HepG2 (cell line): ENCODE measurements at regions of chr13 and their contacts with region 1.

Region 1: GRCh38 chr13:23715762-23716235 is 145.6 kb downstream of the TNFRSF19 start:
- DNase-seq: peak; percentile 62
- ATAC-seq: peak; percentile 93
- H3K4me3 ChIP-seq: peak overlapping the region; percentile 38 to 64 (median 49); a peak in 5 of 6 replicates
- H3K27ac ChIP-seq: no peak overlapping the region
- H3K4me1 ChIP-seq: peaks cover 46% of the 10 kb centered on the region
- H3K27me3 ChIP-seq: no peaks in the 10 kb centered on the region
- CTCF ChIP-seq: peak; percentile 94
- EP300 ChIP-seq: no peak
- POLR2A ChIP-seq: no peak
- RAD21 ChIP-seq: peak; percentile 89

Region 2: GRCh38 chr13:23510979-23511735 is 204.6 kb before region 1 on chr13:
- CTCF ChIA-PET with region 1: interaction called, 3 read pairs
- POLR2A ChIA-PET with region 1: no interaction called
- in situ Hi-C with region 1: no loop called
- intact Hi-C with region 1: loop called (anchors 2 kb)
- DNase-seq: peak; percentile 62
- ATAC-seq: peak; percentile 80
- H3K4me3 ChIP-seq: no peak overlapping the region
- H3K27ac ChIP-seq: no peak overlapping the region
- H3K4me1 ChIP-seq: peaks cover 2% of the 10 kb centered on the region
- H3K27me3 ChIP-seq: no peaks in the 10 kb centered on the region
- CTCF ChIP-seq: peak; percentile 72
- EP300 ChIP-seq: no peak
- POLR2A ChIP-seq: no peak
- RAD21 ChIP-seq: peak; percentile 53

Region 3: DNA sequence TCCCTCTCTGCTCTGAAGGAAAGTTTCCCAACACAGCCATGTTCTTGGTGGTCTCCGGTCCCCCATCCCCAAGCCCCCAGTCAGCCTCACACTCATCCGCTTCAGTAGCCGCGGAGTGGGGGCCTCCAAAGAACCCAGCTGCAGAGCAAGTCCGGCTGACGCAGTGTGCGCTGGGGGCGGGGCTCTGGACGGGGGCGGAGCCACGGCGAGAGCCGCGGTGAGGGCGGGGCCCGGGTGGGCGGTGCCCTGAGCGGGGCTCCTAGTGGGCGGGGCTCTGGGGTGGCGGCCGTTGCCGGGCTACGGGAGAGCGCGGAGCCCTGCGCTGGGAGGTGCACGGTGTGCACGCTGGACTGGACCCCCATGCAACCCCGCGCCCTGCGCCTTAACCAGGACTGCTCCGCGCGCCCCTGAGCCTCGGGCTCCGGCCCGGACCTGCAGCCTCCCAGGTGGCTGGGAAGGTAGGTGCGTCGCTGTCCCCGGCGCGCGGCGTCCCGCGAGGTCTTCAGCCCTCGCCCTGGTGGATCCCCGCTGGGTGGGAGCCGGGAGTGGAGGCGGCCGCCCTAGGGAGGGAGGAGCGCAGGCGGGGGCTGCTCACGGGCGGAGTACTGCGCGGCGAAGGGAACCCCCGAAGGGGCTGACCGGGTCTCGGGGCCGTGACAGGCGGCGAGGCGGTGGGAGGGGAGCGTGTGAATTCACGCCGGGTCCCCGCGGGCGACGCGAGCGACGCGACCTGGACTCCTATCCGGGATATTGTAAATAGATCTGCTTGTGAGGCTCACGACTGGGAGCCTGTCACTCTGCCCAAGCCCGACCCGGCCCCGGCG is 136.5 kb before region 1 on chr13:
- CTCF ChIA-PET with region 1: no interaction called
- POLR2A ChIA-PET with region 1: no interaction called
- in situ Hi-C with region 1: no loop called
- intact Hi-C with region 1: loop called (anchors 2 kb)
- DNase-seq: peak; percentile 79
- ATAC-seq: peak; percentile 96
- H3K4me3 ChIP-seq: peak overlapping the region; percentile 65 to 93 (median 90)
- H3K27ac ChIP-seq: peak overlapping the region; percentile 77
- H3K4me1 ChIP-seq: peaks cover 75% of the 10 kb centered on the region
- H3K27me3 ChIP-seq: no peaks in the 10 kb centered on the region
- CTCF ChIP-seq: no peak
- EP300 ChIP-seq: no peak
- POLR2A ChIP-seq: peak in 1 of 2 experiments; percentile 77; a peak in 3 of 4 replicates
- RAD21 ChIP-seq: no peak; the same call in 1 of the 2 replicates

Region 4: GRCh38 chr13:23856008-23856750 is 140.4 kb after region 1 on chr13:
- CTCF ChIA-PET with region 1: no interaction called
- POLR2A ChIA-PET with region 1: no interaction called
- in situ Hi-C with region 1: no loop called
- intact Hi-C with region 1: no loop called
- DNase-seq: no peak
- ATAC-seq: no peak
- H3K4me3 ChIP-seq: no peak overlapping the region
- H3K27ac ChIP-seq: no peak overlapping the region
- H3K4me1 ChIP-seq: peaks cover 19% of the 10 kb centered on the region
- H3K27me3 ChIP-seq: no peaks in the 10 kb centered on the region
- CTCF ChIP-seq: no peak
- EP300 ChIP-seq: no peak
- POLR2A ChIP-seq: no peak
- RAD21 ChIP-seq: no peak

Region 5: DNA sequence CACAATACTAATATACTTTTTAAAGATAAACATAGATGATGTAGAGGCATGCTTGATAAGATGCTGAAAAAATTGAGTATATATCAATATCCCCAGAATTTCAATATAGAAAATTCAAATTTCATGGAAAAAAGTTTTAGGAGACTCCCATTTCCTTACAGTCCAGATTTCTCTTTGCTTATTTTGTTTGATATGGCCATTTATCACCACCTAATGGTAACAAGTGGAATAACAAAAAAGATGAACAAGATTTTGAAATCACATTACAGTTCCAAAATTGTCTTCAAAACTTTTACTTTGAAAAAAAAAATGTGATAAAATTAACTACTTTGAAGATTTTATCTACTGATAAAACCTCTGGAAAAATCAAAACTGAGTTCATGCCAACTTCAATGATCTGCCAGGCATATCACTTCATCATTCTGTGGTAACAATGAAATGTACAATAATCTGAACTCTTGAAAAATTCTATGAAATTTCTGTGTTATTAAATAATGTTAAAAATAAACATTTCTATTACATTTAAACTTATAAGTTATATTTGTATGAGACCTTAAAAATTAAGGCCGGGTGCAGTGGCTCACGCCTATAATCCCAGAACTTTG is 155.9 kb after region 1 on chr13:
- CTCF ChIA-PET with region 1: interaction called, 34 read pairs
- POLR2A ChIA-PET with region 1: no interaction called
- in situ Hi-C with region 1: loop called (anchors 5 kb)
- intact Hi-C with region 1: loop called (anchors 1 kb)
- DNase-seq: peak; percentile 39
- ATAC-seq: no peak
- H3K4me3 ChIP-seq: no peak overlapping the region
- H3K27ac ChIP-seq: no peak overlapping the region
- H3K4me1 ChIP-seq: peaks cover 17% of the 10 kb centered on the region
- H3K27me3 ChIP-seq: no peaks in the 10 kb centered on the region
- CTCF ChIP-seq: peak; percentile 53
- EP300 ChIP-seq: no peak
- POLR2A ChIP-seq: no peak
- RAD21 ChIP-seq: no peak

Region 6: DNA sequence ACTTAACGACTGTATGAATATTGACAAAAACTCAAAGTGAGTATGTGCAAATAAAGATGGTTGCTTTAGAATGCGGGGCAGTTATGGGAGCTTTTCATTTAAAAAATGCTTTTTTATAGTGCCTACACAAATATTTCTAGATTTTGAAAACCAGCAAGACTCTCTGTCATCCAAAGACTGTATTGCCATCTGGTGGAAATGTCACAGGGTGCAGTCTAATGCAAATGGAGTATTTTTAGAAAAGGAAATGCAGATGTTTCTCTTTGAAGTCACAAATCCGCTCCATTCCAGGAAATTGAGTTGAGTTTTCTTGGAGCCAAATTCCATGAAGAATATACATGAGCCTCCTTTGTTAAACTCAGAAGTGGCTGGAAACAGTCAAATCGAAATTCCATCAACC is 183.8 kb after region 1 on chr13:
- CTCF ChIA-PET with region 1: interaction called, 8 read pairs
- POLR2A ChIA-PET with region 1: no interaction called
- in situ Hi-C with region 1: no loop called
- intact Hi-C with region 1: loop called (anchors 1 kb)
- DNase-seq: peak; percentile 36
- ATAC-seq: peak; percentile 61
- H3K4me3 ChIP-seq: no peak overlapping the region
- H3K27ac ChIP-seq: no peak overlapping the region
- H3K4me1 ChIP-seq: no peaks in the 10 kb centered on the region
- H3K27me3 ChIP-seq: peaks cover 3 to 14% of the 10 kb centered on the region in 2 experiments; a peak in 2 of 5 replicates
- CTCF ChIP-seq: peak; percentile 43; the same call in 1 of the 2 replicates
- EP300 ChIP-seq: no peak
- POLR2A ChIP-seq: no peak
- RAD21 ChIP-seq: no peak

Region 7: GRCh38 chr13:24618014-24618955 is 902.5 kb after region 1 on chr13:
- CTCF ChIA-PET with region 1: no interaction called
- POLR2A ChIA-PET with region 1: no interaction called
- in situ Hi-C with region 1: no loop called
- intact Hi-C with region 1: no loop called
- DNase-seq: no peak
- ATAC-seq: no peak
- H3K4me3 ChIP-seq: no peak overlapping the region
- H3K27ac ChIP-seq: no peak overlapping the region
- H3K4me1 ChIP-seq: no peaks in the 10 kb centered on the region
- H3K27me3 ChIP-seq: peaks cover 0 to 18% of the 10 kb centered on the region in 2 experiments; a peak in 4 of 5 replicates
- CTCF ChIP-seq: no peak
- EP300 ChIP-seq: no peak
- POLR2A ChIP-seq: no peak
- RAD21 ChIP-seq: no peak